Ovary (tissue), 10 donors: ENCODE measurements at regions of chr12 and their contacts with region 1.

Region 1: DNA sequence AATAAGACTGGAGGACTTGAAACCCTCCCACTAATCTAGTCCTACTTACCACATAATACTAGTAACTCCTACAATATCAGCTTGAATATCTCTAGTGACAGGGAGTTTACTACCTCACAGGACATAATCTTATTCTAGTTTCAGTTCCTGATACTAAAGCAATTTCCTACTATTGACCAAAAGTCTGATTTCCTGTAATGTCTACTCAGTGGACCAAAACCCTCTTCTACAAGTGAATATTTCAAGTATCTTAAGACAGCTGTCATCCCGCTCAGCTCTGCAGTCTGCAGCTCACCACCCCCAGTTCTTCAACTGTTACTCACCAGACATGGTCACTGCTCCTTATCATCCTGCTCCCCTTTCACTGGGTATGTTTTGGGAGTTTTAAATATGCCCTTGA is 70.8 kb upstream of the TMCC3 start:
- DNase-seq: no peak
- H3K4me3 ChIP-seq: no peak overlapping the region
- H3K27ac ChIP-seq: no peak overlapping the region
- H3K4me1 ChIP-seq: peaks cover 10% of the 10 kb centered on the region
- H3K27me3 ChIP-seq: no peaks in the 10 kb centered on the region
- CTCF ChIP-seq: no peak
- EP300 ChIP-seq: no peak
- POLR2A ChIP-seq: no peak

Region 2: GRCh38 chr12:94207849-94208621 is 513.1 kb before region 1 on chr12:
- intact Hi-C with region 1: no loop called
- DNase-seq: peak in 2 of 5 donors; percentile 18 to 37
- H3K4me3 ChIP-seq: no peak overlapping the region
- H3K27ac ChIP-seq: peak overlapping the region; percentile 49 to 73
- H3K4me1 ChIP-seq: peaks cover 20% of the 10 kb centered on the region
- H3K27me3 ChIP-seq: no peaks in the 10 kb centered on the region
- CTCF ChIP-seq: no peak
- EP300 ChIP-seq: no peak
- POLR2A ChIP-seq: no peak

Region 3: GRCh38 chr12:94218233-94218632 is 502.9 kb before region 1 on chr12:
- intact Hi-C with region 1: no loop called
- DNase-seq: no peak
- H3K4me3 ChIP-seq: no peak overlapping the region
- H3K27ac ChIP-seq: no peak overlapping the region
- H3K4me1 ChIP-seq: no peaks in the 10 kb centered on the region
- H3K27me3 ChIP-seq: no peaks in the 10 kb centered on the region
- CTCF ChIP-seq: no peak
- EP300 ChIP-seq: no peak
- POLR2A ChIP-seq: no peak

Region 4: DNA sequence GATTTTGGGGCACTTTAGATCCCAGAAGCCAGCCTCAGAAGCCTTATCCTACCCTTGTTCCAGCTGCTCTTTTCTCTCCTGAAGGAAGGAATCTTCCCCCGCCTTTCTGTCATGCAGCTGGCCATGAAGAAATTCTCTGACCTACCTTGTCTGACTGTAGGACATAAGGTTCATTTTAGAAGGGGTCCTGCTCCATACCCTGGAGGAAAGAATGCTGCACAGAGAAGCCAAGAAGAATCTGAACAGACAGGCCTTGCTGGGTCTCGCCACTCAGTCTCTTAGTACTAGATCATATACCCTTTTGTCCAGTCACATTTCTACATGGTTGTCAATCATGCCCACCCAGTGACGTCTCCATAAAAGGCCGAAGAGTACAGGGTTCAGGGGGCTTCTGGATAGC is 64.6 kb before region 1 on chr12:
- intact Hi-C with region 1: loop called in 1 of 4 experiments (anchors 2 kb)
- DNase-seq: no peak
- H3K4me3 ChIP-seq: no peak overlapping the region
- H3K27ac ChIP-seq: no peak overlapping the region
- H3K4me1 ChIP-seq: no peaks in the 10 kb centered on the region
- H3K27me3 ChIP-seq: no peaks in the 10 kb centered on the region
- CTCF ChIP-seq: no peak
- EP300 ChIP-seq: no peak
- POLR2A ChIP-seq: no peak